Cardiac septum (tissue), 1 donor: ENCODE measurements at regions of chr1 and their contacts with region 1.

Region 1: GRCh38 chr1:53524428-53525375 is 65.5 kb downstream of the DMRTB1 start:
- DNase-seq: no peak

Region 2: DNA sequence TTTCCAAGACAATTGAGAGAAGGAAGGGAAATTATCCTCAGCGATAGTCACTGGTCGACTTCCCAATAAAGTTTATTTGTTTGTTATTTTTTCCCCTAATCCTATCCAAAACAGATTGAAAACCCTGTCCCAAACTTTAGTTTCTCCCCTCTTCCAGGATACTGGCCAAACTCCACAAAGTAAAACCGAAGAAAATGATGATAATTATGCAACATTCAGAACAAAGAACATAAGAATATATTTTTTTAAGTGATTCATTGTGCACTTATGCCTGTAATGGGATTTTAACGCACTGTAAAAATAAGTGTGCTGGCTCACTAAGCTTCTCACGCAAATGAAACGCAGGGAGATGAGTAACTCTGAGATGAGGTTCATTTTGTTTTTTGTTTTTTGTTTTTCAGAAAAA is 208.2 kb after region 1 on chr1:
- intact Hi-C with region 1: loop called (anchors 2 kb)
- DNase-seq: no peak